MCF 10A (cell line): ENCODE measurements at regions of chr6 and their contacts with region 1.

Region 1: GRCh38 chr6:106979427-106979884 is 4.9 kb upstream of the CD24 start:
- DNase-seq: peak; percentile 85
- H3K4me3 Mint-ChIP-seq: no peak overlapping the region
- H3K27ac Mint-ChIP-seq: no peak overlapping the region
- H3K4me1 Mint-ChIP-seq: peaks cover 5% of the 10 kb centered on the region
- H3K27me3 Mint-ChIP-seq: no peaks in the 10 kb centered on the region
- CTCF ChIP-seq: peak; percentile 90

Region 2: DNA sequence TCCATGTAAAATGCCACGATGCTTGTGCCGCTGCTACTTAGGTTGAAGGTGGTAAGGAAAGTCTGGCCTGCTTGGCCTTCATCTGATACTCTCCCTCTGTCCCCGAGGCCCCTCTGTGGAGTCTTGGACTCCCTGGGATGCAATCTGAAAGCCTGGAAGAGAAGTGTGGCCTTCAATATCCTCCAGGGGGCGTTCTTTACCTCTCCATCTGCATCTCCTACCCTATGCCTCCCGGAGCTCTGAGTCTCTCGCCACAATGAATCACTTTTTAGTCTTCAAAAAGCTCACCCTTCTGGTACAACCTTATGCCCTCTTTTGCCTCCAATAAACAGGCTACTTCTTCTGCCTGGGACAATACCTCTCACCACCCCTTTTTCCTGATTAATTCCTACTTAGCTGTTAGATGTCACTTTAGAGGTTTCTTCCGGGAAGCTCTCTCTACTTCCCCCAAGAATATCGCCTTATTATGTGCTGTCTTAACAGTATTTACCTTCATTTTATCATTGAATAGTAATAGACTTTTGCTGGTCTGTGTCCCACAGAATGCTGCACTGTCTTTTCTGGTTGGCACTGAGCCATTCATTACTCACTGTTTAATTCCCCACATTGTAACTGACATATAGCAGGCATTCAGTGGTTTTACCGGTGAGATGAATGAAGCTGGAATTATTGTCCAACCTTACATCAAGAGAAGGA is 640.0 kb before region 1 on chr6:
- CTCF ChIA-PET with region 1: interaction called, 11 read pairs
- POLR2A ChIA-PET with region 1: interaction called, 3 read pairs
- intact Hi-C with region 1: loop called (anchors 1 kb)
- DNase-seq: peak; percentile 87
- H3K4me3 Mint-ChIP-seq: peak overlapping the region; percentile 61
- H3K27ac Mint-ChIP-seq: peak overlapping the region; percentile 43
- H3K4me1 Mint-ChIP-seq: peaks cover 11% of the 10 kb centered on the region
- H3K27me3 Mint-ChIP-seq: no peaks in the 10 kb centered on the region
- CTCF ChIP-seq: peak; percentile 68

Region 3: DNA sequence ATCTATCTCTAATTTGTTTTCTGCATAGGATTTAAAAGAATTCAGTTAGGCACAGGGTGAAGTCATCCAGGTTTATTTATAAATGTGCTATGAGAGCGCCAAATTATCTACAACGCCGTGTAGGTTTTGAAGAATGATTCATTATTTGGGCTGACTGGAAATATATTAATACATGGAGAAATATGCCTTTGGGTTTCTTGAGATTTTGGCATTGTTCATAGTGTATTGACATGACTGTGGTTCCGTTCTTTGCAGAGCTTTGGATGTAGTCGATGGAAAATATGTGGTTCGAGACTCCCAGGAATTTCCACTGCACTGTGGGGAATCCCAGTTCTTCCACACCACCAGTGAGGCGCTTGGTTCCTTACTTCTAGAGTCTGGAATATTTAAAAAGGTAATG is 528.0 kb before region 1 on chr6:
- CTCF ChIA-PET with region 1: interaction called, 46 read pairs
- POLR2A ChIA-PET with region 1: interaction called, 4 read pairs
- intact Hi-C with region 1: loop called (anchors 1 kb)
- DNase-seq: peak; percentile 25
- H3K4me3 Mint-ChIP-seq: no peak overlapping the region
- H3K27ac Mint-ChIP-seq: peak overlapping the region; percentile 43
- H3K4me1 Mint-ChIP-seq: peaks cover 25% of the 10 kb centered on the region
- H3K27me3 Mint-ChIP-seq: no peaks in the 10 kb centered on the region
- CTCF ChIP-seq: no peak

Region 4: GRCh38 chr6:106608062-106608668 is 371.3 kb before region 1 on chr6:
- CTCF ChIA-PET with region 1: interaction called, 16 read pairs
- POLR2A ChIA-PET with region 1: interaction called, 3 read pairs
- intact Hi-C with region 1: loop called (anchors 1 kb)
- DNase-seq: peak; percentile 80
- H3K4me3 Mint-ChIP-seq: no peak overlapping the region
- H3K27ac Mint-ChIP-seq: no peak overlapping the region
- H3K4me1 Mint-ChIP-seq: no peaks in the 10 kb centered on the region
- H3K27me3 Mint-ChIP-seq: no peaks in the 10 kb centered on the region
- CTCF ChIP-seq: peak; percentile 82

Region 5: DNA sequence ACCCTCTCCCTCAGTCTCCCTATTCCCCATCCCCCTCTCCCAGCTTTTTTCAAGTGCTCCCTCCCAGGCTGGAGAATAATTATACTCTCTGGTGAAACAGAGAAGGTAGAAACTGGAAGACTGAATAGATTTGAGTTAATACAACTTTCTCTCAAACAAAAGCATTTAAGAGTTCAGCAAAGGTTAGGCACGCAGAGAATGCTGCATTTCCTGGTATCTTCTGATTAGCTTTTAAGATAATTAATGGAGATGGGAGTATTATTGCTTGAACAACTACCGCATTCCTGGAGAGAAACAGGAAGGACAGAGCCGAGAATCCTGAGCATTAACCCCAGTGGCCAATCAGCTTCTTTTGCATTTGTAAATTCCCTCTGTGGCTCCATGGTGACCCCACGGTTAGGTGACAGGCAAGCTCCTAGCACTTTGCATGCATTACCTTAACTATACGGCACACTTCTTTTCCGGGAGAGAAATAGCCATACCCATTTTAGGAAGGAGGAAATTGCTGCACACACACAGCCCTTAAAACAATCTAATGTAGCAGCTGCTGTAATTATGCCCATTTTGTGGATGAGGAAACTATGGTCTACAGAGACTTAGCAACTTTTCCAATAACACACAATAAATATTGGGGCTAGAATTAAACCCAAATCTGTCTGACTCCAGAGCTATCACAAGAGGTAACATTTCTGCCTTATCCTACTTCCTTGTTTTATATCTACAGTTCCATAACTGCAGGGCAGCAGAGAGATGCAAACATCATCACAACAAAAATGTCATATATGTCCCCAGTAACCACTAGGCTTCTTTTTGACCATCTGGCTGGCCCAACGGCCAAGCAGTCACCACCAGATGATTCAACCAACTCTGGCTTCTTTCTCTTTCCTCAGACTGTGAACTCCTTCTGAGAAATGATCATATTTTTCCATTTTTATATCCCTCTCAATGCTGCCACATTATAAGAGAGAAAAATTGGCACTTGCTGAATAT is 174.8 kb before region 1 on chr6:
- CTCF ChIA-PET with region 1: interaction called, 5 read pairs
- POLR2A ChIA-PET with region 1: no interaction called
- intact Hi-C with region 1: loop called (anchors 10 kb)
- DNase-seq: no peak
- H3K4me3 Mint-ChIP-seq: no peak overlapping the region
- H3K27ac Mint-ChIP-seq: no peak overlapping the region
- H3K4me1 Mint-ChIP-seq: peaks cover under 1% of the 10 kb centered on the region
- H3K27me3 Mint-ChIP-seq: no peaks in the 10 kb centered on the region
- CTCF ChIP-seq: no peak

Region 6: GRCh38 chr6:107209406-107210305 is 230.2 kb after region 1 on chr6:
- CTCF ChIA-PET with region 1: no interaction called
- POLR2A ChIA-PET with region 1: no interaction called
- intact Hi-C with region 1: no loop called
- DNase-seq: no peak
- H3K4me3 Mint-ChIP-seq: no peak overlapping the region
- H3K27ac Mint-ChIP-seq: no peak overlapping the region
- H3K4me1 Mint-ChIP-seq: peaks cover 5% of the 10 kb centered on the region
- H3K27me3 Mint-ChIP-seq: no peaks in the 10 kb centered on the region
- CTCF ChIP-seq: no peak